CD4-positive, alpha-beta memory T cell (primary cell): ENCODE measurements at regions of chr2 and their contacts with region 1.

Region 1: GRCh38 chr2:237072067-237072931 is 13.4 kb upstream of the COPS8 start:
- DNase-seq: peak; percentile 46 to 60 (median 51)
- H3K4me3 ChIP-seq: no peak overlapping the region
- H3K4me3 Mint-ChIP-seq: no peak overlapping the region
- H3K27ac ChIP-seq: no peak overlapping the region
- H3K27ac Mint-ChIP-seq: no peak overlapping the region
- H3K4me1 ChIP-seq: no peaks in the 10 kb centered on the region
- H3K4me1 Mint-ChIP-seq: no peaks in the 10 kb centered on the region
- H3K27me3 ChIP-seq: no peaks in the 10 kb centered on the region
- H3K27me3 Mint-ChIP-seq: no peaks in the 10 kb centered on the region

Region 2: GRCh38 chr2:236343400-236344161 is 728.7 kb before region 1 on chr2:
- CTCF ChIA-PET with region 1: interaction called, 6 read pairs
- POLR2A ChIA-PET with region 1: no interaction called
- intact Hi-C with region 1: loop called (anchors 1 kb)
- DNase-seq: peak; percentile 41 to 60 (median 57)
- H3K4me3 ChIP-seq: no peak overlapping the region
- H3K4me3 Mint-ChIP-seq: no peak overlapping the region
- H3K27ac ChIP-seq: no peak overlapping the region
- H3K27ac Mint-ChIP-seq: no peak overlapping the region
- H3K4me1 ChIP-seq: no peaks in the 10 kb centered on the region
- H3K4me1 Mint-ChIP-seq: peaks cover 0 to 4% (median 0%) of the 10 kb centered on the region in 4 donors
- H3K27me3 ChIP-seq: no peaks in the 10 kb centered on the region
- H3K27me3 Mint-ChIP-seq: peaks cover 0 to 17% of the 10 kb centered on the region in 2 donors

Region 3: DNA sequence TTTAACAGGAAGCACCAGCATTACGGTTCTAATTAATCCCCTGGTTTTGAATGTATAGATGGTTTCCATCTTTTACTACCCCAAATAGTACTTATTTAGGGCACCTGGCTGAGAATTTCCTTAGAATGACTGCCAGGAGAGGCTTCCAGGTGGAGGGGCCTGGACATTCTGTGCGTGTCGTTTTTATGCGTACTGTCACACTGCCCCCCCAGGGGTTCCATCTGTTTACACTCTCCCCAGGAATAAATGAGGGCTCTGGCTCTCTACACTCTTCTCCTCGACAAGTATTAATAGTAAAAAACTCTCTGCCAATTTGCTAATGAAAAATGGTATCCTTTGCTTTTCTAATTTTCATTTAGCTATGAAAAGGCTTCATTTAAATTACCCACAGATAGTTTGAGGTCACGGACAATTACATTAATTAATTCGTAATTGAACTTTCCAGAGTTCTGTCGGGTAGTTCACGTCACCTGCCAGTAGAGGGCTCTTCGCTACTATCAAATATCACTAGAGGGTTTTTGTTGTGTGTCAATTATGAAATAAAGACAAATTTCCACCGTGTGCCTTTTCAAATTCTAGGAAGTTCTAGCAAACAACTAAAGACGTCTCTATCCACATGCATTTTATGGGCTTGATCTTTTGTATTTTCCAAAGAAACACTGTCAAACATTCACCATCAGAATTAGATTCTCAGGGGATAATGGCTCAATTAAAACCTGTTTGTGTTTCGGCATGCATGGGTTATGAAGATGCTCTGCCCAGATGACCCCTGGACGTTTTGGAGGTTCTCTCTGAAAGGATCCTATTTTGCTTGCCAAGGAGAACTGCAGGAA is 719.3 kb before region 1 on chr2:
- CTCF ChIA-PET with region 1: interaction called, 12 read pairs
- POLR2A ChIA-PET with region 1: no interaction called
- intact Hi-C with region 1: loop called (anchors 1 kb)
- DNase-seq: peak in 4 of 5 donors; percentile 39 to 51 (median 45)
- H3K4me3 ChIP-seq: no peak overlapping the region
- H3K4me3 Mint-ChIP-seq: peak overlapping the region in 1 of 8 donors; percentile 56
- H3K27ac ChIP-seq: no peak overlapping the region
- H3K27ac Mint-ChIP-seq: peak overlapping the region in 2 of 7 donors; percentile 12 to 72
- H3K4me1 ChIP-seq: no peaks in the 10 kb centered on the region
- H3K4me1 Mint-ChIP-seq: peaks cover 4 to 7% (median 6%) of the 10 kb centered on the region in 4 donors
- H3K27me3 ChIP-seq: no peaks in the 10 kb centered on the region
- H3K27me3 Mint-ChIP-seq: peaks cover 10 to 20% of the 10 kb centered on the region in 2 donors

Region 4: DNA sequence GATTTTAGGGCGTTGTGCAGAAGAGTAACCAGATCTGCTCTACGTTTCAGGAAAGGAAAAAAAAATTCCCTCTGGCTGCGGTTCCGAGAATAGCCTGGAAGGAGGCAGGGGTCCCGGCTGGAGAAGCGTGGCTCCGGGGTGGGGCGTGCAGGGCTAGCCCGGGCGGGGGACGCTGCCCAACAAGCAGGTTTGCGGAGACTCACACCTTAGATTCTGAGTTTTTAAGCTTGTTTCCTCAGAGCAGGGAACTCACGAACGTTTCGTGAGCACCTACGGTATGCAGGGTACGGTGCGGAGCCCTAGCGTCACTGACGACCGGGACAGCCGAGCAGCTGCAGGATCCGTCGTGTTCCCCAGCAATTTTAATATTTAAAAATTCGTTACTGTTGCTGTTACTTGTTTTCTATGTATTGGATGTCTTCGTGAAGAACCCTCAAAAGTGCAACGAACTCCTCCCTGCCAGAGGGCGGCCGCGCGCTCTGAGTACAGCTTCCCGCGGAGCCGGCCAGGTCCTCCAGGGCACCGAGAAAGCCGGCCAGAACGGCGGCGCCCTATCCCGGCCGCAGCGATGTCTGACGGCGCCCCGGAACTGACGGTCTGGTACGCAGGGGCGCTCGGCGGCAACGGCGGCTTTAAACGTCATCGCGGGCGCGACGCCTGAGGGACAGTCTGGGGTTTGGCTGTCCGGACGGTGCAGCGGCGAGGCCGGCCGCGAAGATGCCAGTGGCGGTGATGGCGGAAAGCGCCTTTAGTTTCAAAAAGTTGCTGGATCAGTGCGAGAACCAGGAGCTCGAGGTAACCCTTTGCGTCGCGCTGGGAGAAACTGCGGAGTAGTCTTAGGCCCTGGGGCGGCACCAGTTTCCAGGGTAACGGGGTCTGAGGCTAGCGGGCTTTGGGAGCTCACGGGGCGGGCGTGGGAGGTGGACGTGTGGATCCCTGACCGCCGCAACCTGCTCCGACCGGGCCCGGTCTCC is 13.2 kb after region 1 on chr2 and contains the start of gene COPS8:
- CTCF ChIA-PET with region 1: interaction called, 25 read pairs
- POLR2A ChIA-PET with region 1: interaction called, 5 read pairs
- intact Hi-C with region 1: no loop called
- DNase-seq: peak; percentile 88 to 91 (median 91)
- H3K4me3 ChIP-seq: peak within 1 kb of the TSS; percentile 48 to 79
- H3K4me3 Mint-ChIP-seq: peak within 1 kb of the TSS; percentile 99 to 100 (median 99)
- H3K27ac ChIP-seq: peak within 1 kb of the TSS; percentile 81
- H3K27ac Mint-ChIP-seq: peak within 1 kb of the TSS; percentile 97 to 100 (median 100)
- H3K4me1 ChIP-seq: peaks cover 16% of the 10 kb centered on the region
- H3K4me1 Mint-ChIP-seq: peaks cover 9 to 30% (median 16%) of the 10 kb centered on the region in 4 donors
- H3K27me3 ChIP-seq: no peaks in the 10 kb centered on the region
- H3K27me3 Mint-ChIP-seq: peaks cover 0 to 1% of the 10 kb centered on the region in 2 donors
- total RNA-seq, gene COPS8: 33.4 to 34.5 TPM